CD4-positive, alpha-beta memory T cell (primary cell): ENCODE measurements at regions of chr1 and their contacts with region 1.

Region 1: DNA sequence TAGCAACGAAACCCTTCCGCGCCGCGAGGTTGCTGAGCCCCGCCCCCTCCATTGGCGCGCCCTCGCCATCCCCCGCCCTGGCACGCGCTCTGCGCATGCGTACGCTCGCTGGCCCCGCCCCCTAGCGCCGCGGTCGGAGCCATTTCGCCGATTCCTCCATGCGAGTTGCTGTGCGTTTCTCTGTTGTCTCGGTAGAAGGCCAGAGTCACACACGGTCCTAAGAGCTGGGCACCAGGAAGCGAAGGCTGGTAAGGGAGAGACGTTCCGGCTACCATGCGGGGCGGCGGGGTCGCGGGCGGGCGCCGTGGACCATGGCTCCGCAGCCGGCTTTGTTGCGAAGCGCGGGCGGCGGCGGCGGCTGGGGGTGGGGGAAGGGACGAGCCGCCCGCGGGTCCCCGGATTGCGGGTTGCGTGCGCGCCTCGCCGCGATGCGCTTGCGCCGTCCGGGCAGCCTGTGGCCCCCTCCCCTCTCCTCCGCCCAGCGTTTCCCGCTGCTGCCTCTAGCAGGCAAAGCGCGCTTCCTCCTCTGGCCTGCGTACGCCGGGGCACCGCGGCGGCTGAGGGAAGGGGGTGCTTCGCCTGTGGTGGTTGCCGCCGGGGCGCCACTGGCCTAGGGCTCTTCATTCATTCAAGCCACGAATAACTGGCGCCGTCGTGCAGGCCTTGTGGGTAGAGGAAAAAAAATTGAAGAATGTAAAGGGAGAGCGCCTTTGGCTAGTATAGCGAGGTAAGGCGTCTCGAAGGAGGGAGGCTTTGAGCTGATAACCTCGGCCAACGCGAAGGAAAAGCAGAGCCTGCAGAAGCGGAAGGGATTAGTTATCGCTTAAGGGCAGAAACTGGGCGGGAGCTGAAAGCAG is at the start of gene DHX9:
- DNase-seq: peak; percentile 95 to 99 (median 96)
- H3K4me3 ChIP-seq: peak within 1 kb of the TSS; percentile 44 to 69
- H3K4me3 Mint-ChIP-seq: peak within 1 kb of the TSS; percentile 88 to 99 (median 96)
- H3K27ac ChIP-seq: peak within 1 kb of the TSS; percentile 81
- H3K27ac Mint-ChIP-seq: peak within 1 kb of the TSS; percentile 89 to 100 (median 98)
- H3K4me1 ChIP-seq: peaks cover 38% of the 10 kb centered on the region
- H3K4me1 Mint-ChIP-seq: peaks cover 34 to 57% (median 42%) of the 10 kb centered on the region in 4 donors
- H3K27me3 ChIP-seq: no peaks in the 10 kb centered on the region
- H3K27me3 Mint-ChIP-seq: no peaks in the 10 kb centered on the region
- total RNA-seq, gene DHX9: 222 TPM

Region 2: GRCh38 chr1:182404781-182405180 is 434.7 kb before region 1 on chr1:
- CTCF ChIA-PET with region 1: no interaction called
- POLR2A ChIA-PET with region 1: no interaction called
- intact Hi-C with region 1: no loop called
- DNase-seq: no peak
- H3K4me3 ChIP-seq: no peak overlapping the region
- H3K4me3 Mint-ChIP-seq: no peak overlapping the region
- H3K27ac ChIP-seq: no peak overlapping the region
- H3K27ac Mint-ChIP-seq: no peak overlapping the region
- H3K4me1 ChIP-seq: no peaks in the 10 kb centered on the region
- H3K4me1 Mint-ChIP-seq: no peaks in the 10 kb centered on the region
- H3K27me3 ChIP-seq: no peaks in the 10 kb centered on the region
- H3K27me3 Mint-ChIP-seq: peaks cover 20 to 24% of the 10 kb centered on the region in 2 donors

Region 3: DNA sequence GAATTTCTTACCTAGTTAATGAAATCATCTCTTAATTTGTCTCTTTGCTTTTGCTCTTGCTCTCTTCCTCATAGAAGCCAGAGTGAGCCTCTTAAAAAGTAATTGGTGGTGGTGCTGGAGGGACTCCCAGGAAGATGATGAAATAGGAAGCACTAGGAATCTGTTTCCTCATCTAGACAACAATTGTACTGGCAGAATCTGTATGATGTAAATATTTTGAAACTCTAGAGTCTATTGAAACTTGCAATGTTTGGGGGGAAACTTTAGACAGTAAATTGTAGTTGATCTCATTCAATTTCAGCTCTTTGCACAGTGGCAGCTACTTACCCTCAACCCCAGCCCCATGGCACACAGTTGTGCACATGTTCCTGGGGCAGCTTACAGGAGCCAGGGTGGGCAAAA is 378.9 kb before region 1 on chr1:
- CTCF ChIA-PET with region 1: no interaction called
- POLR2A ChIA-PET with region 1: no interaction called
- intact Hi-C with region 1: no loop called
- DNase-seq: no peak
- H3K4me3 ChIP-seq: no peak overlapping the region
- H3K4me3 Mint-ChIP-seq: no peak overlapping the region
- H3K27ac ChIP-seq: no peak overlapping the region
- H3K27ac Mint-ChIP-seq: no peak overlapping the region
- H3K4me1 ChIP-seq: no peaks in the 10 kb centered on the region
- H3K4me1 Mint-ChIP-seq: no peaks in the 10 kb centered on the region
- H3K27me3 ChIP-seq: peaks cover 4% of the 10 kb centered on the region
- H3K27me3 Mint-ChIP-seq: peaks cover 24 to 31% of the 10 kb centered on the region in 2 donors

Region 4: GRCh38 chr1:182588500-182589452 is 250.7 kb before region 1 on chr1 and contains the start of gene RNASEL:
- CTCF ChIA-PET with region 1: no interaction called
- POLR2A ChIA-PET with region 1: interaction called, 11 read pairs
- intact Hi-C with region 1: loop called (anchors 1 kb)
- DNase-seq: peak; percentile 60 to 77 (median 71)
- H3K4me3 ChIP-seq: peak within 1 kb of the TSS; percentile 93 to 94
- H3K4me3 Mint-ChIP-seq: peak within 1 kb of the TSS; percentile 93 to 99 (median 96)
- H3K27ac ChIP-seq: peak within 1 kb of the TSS; percentile 98
- H3K27ac Mint-ChIP-seq: peak within 1 kb of the TSS; percentile 96 to 100 (median 99)
- H3K4me1 ChIP-seq: peaks cover 48% of the 10 kb centered on the region
- H3K4me1 Mint-ChIP-seq: peaks cover 36 to 61% (median 46%) of the 10 kb centered on the region in 4 donors
- H3K27me3 ChIP-seq: no peaks in the 10 kb centered on the region
- H3K27me3 Mint-ChIP-seq: no peaks in the 10 kb centered on the region
- total RNA-seq, gene RNASEL: 33.9 to 35.4 TPM

Region 5: DNA sequence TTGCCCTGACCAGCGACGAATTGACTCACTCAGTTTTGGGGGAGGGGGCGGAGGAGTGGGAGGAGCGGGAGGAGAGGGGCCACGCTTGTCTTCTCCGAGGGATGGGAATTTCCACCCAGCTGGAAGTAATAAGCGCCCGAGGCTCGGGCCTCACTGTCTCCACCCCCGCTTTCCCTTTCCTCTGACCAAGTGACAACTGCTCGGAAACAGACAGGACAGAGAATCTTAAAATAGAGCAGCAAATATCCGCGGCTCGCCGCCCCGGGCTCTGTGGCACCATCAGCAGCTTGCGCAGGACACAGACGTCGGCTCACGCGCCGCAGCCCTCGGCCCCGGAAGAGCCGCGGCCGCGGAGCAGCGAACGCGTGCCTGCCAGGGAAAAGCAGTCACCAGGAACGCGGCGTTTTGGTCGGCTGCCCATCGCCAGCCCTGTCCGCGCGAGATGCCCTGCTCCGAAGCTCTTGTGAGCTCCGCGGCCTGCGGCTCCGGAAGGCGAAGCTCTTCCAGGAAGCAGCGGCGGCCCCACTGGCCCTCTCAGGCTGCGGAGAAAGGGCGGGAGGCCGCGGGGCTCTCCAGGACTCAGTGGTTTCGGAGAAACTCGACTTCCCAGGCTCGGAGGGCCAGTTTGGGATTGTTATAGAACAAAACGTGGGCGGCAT is 224.5 kb before region 1 on chr1:
- CTCF ChIA-PET with region 1: no interaction called
- POLR2A ChIA-PET with region 1: interaction called, 4 read pairs
- intact Hi-C with region 1: loop called (anchors 5 kb)
- DNase-seq: peak in 4 of 5 donors; percentile 33 to 60 (median 34)
- H3K4me3 ChIP-seq: peak overlapping the region; percentile 46 to 73
- H3K4me3 Mint-ChIP-seq: peak overlapping the region; percentile 79 to 90 (median 86)
- H3K27ac ChIP-seq: peak overlapping the region; percentile 0
- H3K27ac Mint-ChIP-seq: peak overlapping the region; percentile 76 to 96 (median 95)
- H3K4me1 ChIP-seq: peaks cover 41% of the 10 kb centered on the region
- H3K4me1 Mint-ChIP-seq: peaks cover 30 to 47% (median 33%) of the 10 kb centered on the region in 4 donors
- H3K27me3 ChIP-seq: no peaks in the 10 kb centered on the region
- H3K27me3 Mint-ChIP-seq: peaks cover 2 to 15% of the 10 kb centered on the region in 2 donors

Region 6: GRCh38 chr1:182789138-182790076 is 50.0 kb before region 1 on chr1 and contains the start of gene NPL:
- CTCF ChIA-PET with region 1: interaction called, 3 read pairs
- POLR2A ChIA-PET with region 1: interaction called, 9 read pairs
- intact Hi-C with region 1: loop called (anchors 1 kb)
- DNase-seq: peak; percentile 86 to 89 (median 88)
- H3K4me3 ChIP-seq: peak within 1 kb of the TSS; percentile 69 to 88
- H3K4me3 Mint-ChIP-seq: peak within 1 kb of the TSS; percentile 89 to 94 (median 92)
- H3K27ac ChIP-seq: peak within 1 kb of the TSS; percentile 67
- H3K27ac Mint-ChIP-seq: peak within 1 kb of the TSS; percentile 78 to 92 (median 90)
- H3K4me1 ChIP-seq: peaks cover 13% of the 10 kb centered on the region
- H3K4me1 Mint-ChIP-seq: peaks cover 10 to 16% (median 11%) of the 10 kb centered on the region in 4 donors
- H3K27me3 ChIP-seq: no peaks in the 10 kb centered on the region
- H3K27me3 Mint-ChIP-seq: no peaks in the 10 kb centered on the region
- total RNA-seq, gene NPL: 9.6 TPM

Region 7: GRCh38 chr1:182872881-182873280 is 33.4 kb after region 1 on chr1:
- CTCF ChIA-PET with region 1: no interaction called
- POLR2A ChIA-PET with region 1: interaction called, 3 read pairs
- intact Hi-C with region 1: loop called (anchors 5 kb)
- DNase-seq: no peak
- H3K4me3 ChIP-seq: no peak overlapping the region
- H3K4me3 Mint-ChIP-seq: no peak overlapping the region
- H3K27ac ChIP-seq: no peak overlapping the region
- H3K27ac Mint-ChIP-seq: peak overlapping the region in 3 of 7 donors; percentile 30 to 59 (median 47)
- H3K4me1 ChIP-seq: no peaks in the 10 kb centered on the region
- H3K4me1 Mint-ChIP-seq: peaks cover 4 to 14% (median 11%) of the 10 kb centered on the region in 4 donors
- H3K27me3 ChIP-seq: no peaks in the 10 kb centered on the region
- H3K27me3 Mint-ChIP-seq: no peaks in the 10 kb centered on the region

Region 8: GRCh38 chr1:182889997-182890396 is 50.6 kb after region 1 on chr1:
- CTCF ChIA-PET with region 1: interaction called, 5 read pairs
- POLR2A ChIA-PET with region 1: interaction called, 4 read pairs
- intact Hi-C with region 1: loop called (anchors 10 kb)
- DNase-seq: peak in 3 of 5 donors; percentile 2 to 14 (median 13)
- H3K4me3 ChIP-seq: no peak overlapping the region
- H3K4me3 Mint-ChIP-seq: no peak overlapping the region
- H3K27ac ChIP-seq: no peak overlapping the region
- H3K27ac Mint-ChIP-seq: peak overlapping the region in 4 of 7 donors; percentile 38 to 63 (median 56)
- H3K4me1 ChIP-seq: peaks cover 9% of the 10 kb centered on the region
- H3K4me1 Mint-ChIP-seq: peaks cover 15 to 22% (median 19%) of the 10 kb centered on the region in 4 donors
- H3K27me3 ChIP-seq: no peaks in the 10 kb centered on the region
- H3K27me3 Mint-ChIP-seq: peaks cover 0 to 4% of the 10 kb centered on the region in 2 donors